ENCODE measurements at regions of chr20 and their contacts with region 1.

Region 1: GRCh38 chr20:59945731-59946130 is 5.5 kb downstream of the FAM217B start:
- H3K4me3 ChIP-seq: no peak overlapping the region
- H3K27ac ChIP-seq: no peak overlapping the region
- H3K4me1 ChIP-seq: peaks cover 14% of the 10 kb centered on the region; the same call in 1 of the 2 replicates
- CTCF ChIP-seq: no peak

Region 2: DNA sequence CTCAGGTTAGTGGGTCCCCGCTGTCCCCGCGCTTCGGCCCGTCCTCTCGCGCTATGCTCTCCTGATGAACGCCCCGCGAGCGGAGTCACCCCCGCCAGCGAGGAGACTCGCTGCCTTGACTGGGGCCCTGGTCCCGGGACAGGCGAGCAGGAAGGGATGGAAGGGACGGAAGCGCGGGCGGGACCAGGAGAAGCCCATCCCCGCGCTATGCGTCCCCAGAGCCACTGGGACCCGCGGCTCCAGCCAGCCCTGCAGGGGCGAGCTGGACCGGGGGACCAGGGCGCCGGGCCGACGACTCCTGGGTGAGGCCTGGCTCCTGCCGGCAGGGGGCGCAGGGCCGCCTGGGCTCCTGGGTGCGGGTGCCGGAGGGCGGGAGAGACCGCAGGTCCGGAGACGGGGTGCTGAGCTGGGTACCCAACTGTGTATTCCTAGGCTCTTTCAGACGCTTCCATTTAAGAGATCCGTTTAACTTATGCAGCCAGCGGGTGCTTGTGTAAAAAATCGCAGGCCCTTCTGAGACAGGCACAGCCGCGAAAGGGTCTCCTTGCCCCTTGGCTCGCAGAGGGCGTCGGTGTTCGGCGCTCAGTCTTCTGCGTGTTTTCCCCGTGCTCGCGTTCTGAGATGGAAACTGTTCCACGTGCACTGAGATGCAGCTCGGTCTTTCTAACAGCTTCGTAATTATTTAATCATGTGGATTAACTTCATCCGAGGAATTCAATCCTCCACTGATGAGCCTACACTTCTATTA is 11.7 kb before region 1 on chr20:
- CTCF ChIA-PET with region 1: interaction called, 19 read pairs
- POLR2A ChIA-PET with region 1: no interaction called
- H3K4me3 ChIP-seq: peak overlapping the region; percentile 63
- H3K27ac ChIP-seq: peak overlapping the region; percentile 55; the same call in 1 of the 2 replicates
- H3K4me1 ChIP-seq: peaks cover 14% of the 10 kb centered on the region
- CTCF ChIP-seq: peak; percentile 90

Region 3: GRCh38 chr20:60395991-60396390 is 450.3 kb after region 1 on chr20:
- CTCF ChIA-PET with region 1: no interaction called
- POLR2A ChIA-PET with region 1: no interaction called
- H3K4me3 ChIP-seq: no peak overlapping the region
- H3K27ac ChIP-seq: no peak overlapping the region
- H3K4me1 ChIP-seq: no peaks in the 10 kb centered on the region
- CTCF ChIP-seq: no peak

Measured in HEK293 (cell line).